CD4-positive, alpha-beta memory T cell (primary cell): ENCODE measurements at regions of chr5 and their contacts with region 1.

Region 1: DNA sequence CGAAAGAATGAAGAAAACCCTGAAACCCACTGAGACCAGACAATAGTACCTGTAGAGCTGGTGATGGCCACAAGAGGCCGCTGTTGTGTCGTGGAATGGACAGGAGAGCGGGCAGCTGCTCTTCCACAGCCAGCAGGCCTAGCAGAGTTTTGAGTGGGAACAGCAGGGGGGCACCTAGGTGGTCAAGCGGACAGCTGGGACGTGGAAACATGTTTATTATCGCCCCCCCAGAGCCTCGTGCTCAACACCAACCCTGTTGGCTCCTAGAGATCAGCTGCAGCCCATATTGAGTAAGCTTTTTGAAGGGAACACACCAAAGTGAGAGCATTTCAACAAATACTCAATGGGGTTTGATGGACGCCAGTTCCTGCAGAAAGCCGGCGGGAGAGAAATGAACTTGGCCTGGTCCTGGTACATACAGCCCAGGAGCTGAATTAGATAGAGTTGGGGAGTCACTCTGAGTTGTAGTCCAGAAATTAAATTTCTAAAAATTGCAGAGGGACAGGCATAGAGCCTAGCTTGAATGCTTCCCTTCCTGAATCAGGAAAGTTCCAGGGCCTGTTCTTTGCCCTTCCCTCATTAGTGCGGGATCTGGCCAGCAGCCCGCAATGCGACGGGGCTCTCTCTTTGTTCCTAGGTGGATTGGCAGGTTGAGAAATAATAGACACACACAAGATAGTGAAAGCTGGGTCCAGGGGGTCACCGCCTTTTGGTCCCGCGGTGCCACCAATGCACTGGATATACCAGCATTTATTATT is 33.8 kb downstream of the MFAP3 start:
- DNase-seq: peak; percentile 75 to 78 (median 76)
- H3K4me3 ChIP-seq: no peak overlapping the region
- H3K4me3 Mint-ChIP-seq: peak overlapping the region in 1 of 8 donors; percentile 21
- H3K27ac ChIP-seq: no peak overlapping the region
- H3K27ac Mint-ChIP-seq: peak overlapping the region in 6 of 7 donors; percentile 1 to 89 (median 46)
- H3K4me1 ChIP-seq: peaks cover 23% of the 10 kb centered on the region
- H3K4me1 Mint-ChIP-seq: peaks cover 5 to 35% (median 14%) of the 10 kb centered on the region in 4 donors
- H3K27me3 ChIP-seq: no peaks in the 10 kb centered on the region
- H3K27me3 Mint-ChIP-seq: peaks cover 0 to 2% of the 10 kb centered on the region in 2 donors

Region 2: DNA sequence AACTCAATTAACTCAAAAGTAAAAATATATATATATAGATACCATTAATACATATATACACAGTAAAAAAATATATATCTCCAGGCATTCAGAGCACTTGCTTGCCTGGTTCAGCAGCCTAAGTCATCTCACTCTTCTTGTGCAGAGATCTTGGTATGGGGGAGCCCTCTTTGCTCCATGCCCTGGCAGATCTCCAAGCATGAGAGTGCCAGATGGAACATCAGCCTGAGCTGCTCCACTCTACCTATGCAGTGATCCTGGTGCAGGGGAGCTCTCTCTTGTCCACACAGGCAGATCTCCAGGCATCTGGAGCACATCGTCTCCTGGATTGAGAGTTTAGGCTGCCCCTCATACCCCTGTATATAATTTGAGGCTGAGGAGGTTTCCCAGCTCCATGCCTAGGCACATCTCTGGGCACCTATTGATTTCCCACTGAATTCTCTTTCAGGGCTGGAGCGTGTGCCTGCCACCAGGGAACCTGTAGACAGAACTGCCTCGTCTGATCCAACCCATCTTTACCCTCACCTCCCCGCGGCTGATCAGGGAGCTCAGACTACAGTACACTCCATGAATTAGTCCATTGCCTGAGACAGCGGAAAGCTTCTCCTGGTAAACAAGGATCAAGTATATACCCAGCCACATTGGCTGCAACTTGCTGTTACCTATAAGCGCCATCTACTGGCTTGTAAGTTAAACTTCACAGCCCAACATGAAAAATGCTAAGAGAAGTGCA is 924.5 kb before region 1 on chr5:
- CTCF ChIA-PET with region 1: no interaction called
- POLR2A ChIA-PET with region 1: no interaction called
- intact Hi-C with region 1: no loop called
- DNase-seq: no peak
- H3K4me3 ChIP-seq: no peak overlapping the region
- H3K4me3 Mint-ChIP-seq: no peak overlapping the region
- H3K27ac ChIP-seq: no peak overlapping the region
- H3K27ac Mint-ChIP-seq: no peak overlapping the region
- H3K4me1 ChIP-seq: no peaks in the 10 kb centered on the region
- H3K4me1 Mint-ChIP-seq: no peaks in the 10 kb centered on the region
- H3K27me3 ChIP-seq: no peaks in the 10 kb centered on the region
- H3K27me3 Mint-ChIP-seq: no peaks in the 10 kb centered on the region

Region 3: DNA sequence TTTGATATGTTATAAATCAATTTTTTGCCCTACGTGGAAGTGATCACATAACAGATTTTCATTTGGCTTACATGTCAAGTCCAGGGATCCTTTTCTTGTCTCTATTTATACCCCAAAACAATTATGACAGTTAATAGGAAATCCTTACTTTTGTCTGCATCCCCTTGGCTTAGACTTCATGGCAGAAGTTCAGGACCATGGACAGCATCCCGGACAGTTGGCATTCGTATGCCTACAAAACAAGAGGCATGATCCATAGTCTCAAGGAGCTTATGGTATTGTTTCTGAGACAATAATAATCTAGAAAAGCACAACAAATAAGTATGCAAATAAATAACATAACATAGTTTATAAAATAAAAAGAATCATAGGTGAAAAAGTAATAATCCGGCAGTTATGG is 796.4 kb before region 1 on chr5:
- CTCF ChIA-PET with region 1: no interaction called
- POLR2A ChIA-PET with region 1: no interaction called
- intact Hi-C with region 1: no loop called
- DNase-seq: no peak
- H3K4me3 ChIP-seq: no peak overlapping the region
- H3K4me3 Mint-ChIP-seq: no peak overlapping the region
- H3K27ac ChIP-seq: no peak overlapping the region
- H3K27ac Mint-ChIP-seq: no peak overlapping the region
- H3K4me1 ChIP-seq: no peaks in the 10 kb centered on the region
- H3K4me1 Mint-ChIP-seq: no peaks in the 10 kb centered on the region
- H3K27me3 ChIP-seq: no peaks in the 10 kb centered on the region
- H3K27me3 Mint-ChIP-seq: no peaks in the 10 kb centered on the region

Region 4: GRCh38 chr5:153797484-153797883 is 275.1 kb before region 1 on chr5:
- CTCF ChIA-PET with region 1: no interaction called
- POLR2A ChIA-PET with region 1: no interaction called
- intact Hi-C with region 1: no loop called
- DNase-seq: no peak
- H3K4me3 ChIP-seq: no peak overlapping the region
- H3K4me3 Mint-ChIP-seq: no peak overlapping the region
- H3K27ac ChIP-seq: no peak overlapping the region
- H3K27ac Mint-ChIP-seq: no peak overlapping the region
- H3K4me1 ChIP-seq: no peaks in the 10 kb centered on the region
- H3K4me1 Mint-ChIP-seq: no peaks in the 10 kb centered on the region
- H3K27me3 ChIP-seq: no peaks in the 10 kb centered on the region
- H3K27me3 Mint-ChIP-seq: no peaks in the 10 kb centered on the region

Region 5: GRCh38 chr5:154038707-154039457 is 33.7 kb before region 1 on chr5 and contains the starts of genes FAM114A2 and MFAP3:
- CTCF ChIA-PET with region 1: interaction called, 16 read pairs
- POLR2A ChIA-PET with region 1: interaction called, 10 read pairs
- intact Hi-C with region 1: no loop called
- DNase-seq: peak; percentile 85 to 91 (median 86)
- H3K4me3 ChIP-seq: peak within 1 kb of the TSS; percentile 59 to 99
- H3K4me3 Mint-ChIP-seq: peak within 1 kb of the TSS; percentile 92 to 99 (median 98)
- H3K27ac ChIP-seq: peak within 1 kb of the TSS; percentile 72
- H3K27ac Mint-ChIP-seq: peak within 1 kb of the TSS; percentile 91 to 99 (median 98)
- H3K4me1 ChIP-seq: peaks cover 44% of the 10 kb centered on the region
- H3K4me1 Mint-ChIP-seq: peaks cover 39 to 59% (median 51%) of the 10 kb centered on the region in 4 donors
- H3K27me3 ChIP-seq: no peaks in the 10 kb centered on the region
- H3K27me3 Mint-ChIP-seq: no peaks in the 10 kb centered on the region
- total RNA-seq, gene FAM114A2: 39.0 to 45.5 TPM
- total RNA-seq, gene MFAP3: 25.4 to 27.4 TPM

Region 6: GRCh38 chr5:154058055-154059038 is 14.2 kb before region 1 on chr5:
- CTCF ChIA-PET with region 1: interaction called, 31 read pairs
- POLR2A ChIA-PET with region 1: interaction called, 3 read pairs
- intact Hi-C with region 1: no loop called
- DNase-seq: no peak
- H3K4me3 ChIP-seq: no peak overlapping the region
- H3K4me3 Mint-ChIP-seq: peak overlapping the region in 4 of 8 donors; percentile 5 to 47 (median 40)
- H3K27ac ChIP-seq: no peak overlapping the region
- H3K27ac Mint-ChIP-seq: peak overlapping the region; percentile 19 to 85 (median 45)
- H3K4me1 ChIP-seq: peaks cover 11% of the 10 kb centered on the region
- H3K4me1 Mint-ChIP-seq: peaks cover 21 to 26% (median 25%) of the 10 kb centered on the region in 4 donors
- H3K27me3 ChIP-seq: no peaks in the 10 kb centered on the region
- H3K27me3 Mint-ChIP-seq: no peaks in the 10 kb centered on the region

Region 7: DNA sequence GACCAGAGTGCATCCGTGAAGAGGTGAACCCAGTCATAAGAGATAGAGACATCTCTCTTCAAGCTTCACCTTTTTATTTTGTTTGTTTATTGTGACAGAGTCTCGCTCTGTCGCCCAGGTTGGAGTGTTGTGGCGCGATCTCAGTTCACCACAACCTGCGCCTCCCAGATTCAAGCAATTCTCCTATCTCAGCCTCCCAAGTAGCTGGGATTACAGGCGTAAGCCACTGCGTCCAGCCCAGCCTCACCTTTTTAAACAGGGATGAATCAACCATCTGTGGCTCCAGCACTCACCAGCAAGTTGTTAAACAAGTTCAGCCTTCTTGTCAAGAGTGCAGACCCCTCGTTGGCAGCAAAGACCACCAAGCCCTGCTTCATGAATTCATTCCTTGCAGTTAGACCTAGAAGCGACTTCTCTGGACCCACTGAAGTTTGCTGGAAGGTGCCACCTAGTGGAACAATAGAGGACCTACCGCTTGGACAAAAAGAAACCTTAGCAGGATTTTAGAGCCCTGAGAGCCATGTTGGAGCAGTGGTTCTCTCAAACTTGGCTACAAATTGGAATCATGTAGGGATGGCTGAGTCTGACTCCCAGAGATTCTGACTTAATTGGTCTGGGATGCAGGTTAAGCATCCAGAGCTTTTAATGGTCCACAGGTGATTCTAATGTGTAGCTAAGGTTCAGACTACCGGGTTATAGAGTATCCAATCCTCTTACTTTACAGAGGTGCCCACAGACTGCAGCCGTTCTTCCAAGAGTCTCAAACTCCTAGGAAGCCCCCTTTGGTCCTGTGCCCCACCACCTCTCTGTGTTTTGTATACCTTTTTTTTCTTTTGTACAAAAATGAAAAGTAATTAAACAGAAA is 107.5 kb after region 1 on chr5:
- CTCF ChIA-PET with region 1: interaction called, 77 read pairs
- POLR2A ChIA-PET with region 1: no interaction called
- intact Hi-C with region 1: loop called (anchors 1 kb)
- DNase-seq: peak in 4 of 5 donors; percentile 37 to 52 (median 42)
- H3K4me3 ChIP-seq: no peak overlapping the region
- H3K4me3 Mint-ChIP-seq: no peak overlapping the region
- H3K27ac ChIP-seq: no peak overlapping the region
- H3K27ac Mint-ChIP-seq: no peak overlapping the region
- H3K4me1 ChIP-seq: no peaks in the 10 kb centered on the region
- H3K4me1 Mint-ChIP-seq: peaks cover 0 to 4% (median 2%) of the 10 kb centered on the region in 4 donors
- H3K27me3 ChIP-seq: no peaks in the 10 kb centered on the region
- H3K27me3 Mint-ChIP-seq: peaks cover 2 to 4% of the 10 kb centered on the region in 2 donors

Region 8: GRCh38 chr5:154196955-154197652 is 124.5 kb after region 1 on chr5:
- CTCF ChIA-PET with region 1: interaction called, 20 read pairs
- POLR2A ChIA-PET with region 1: interaction called, 5 read pairs
- intact Hi-C with region 1: loop called (anchors 1 kb)
- DNase-seq: peak in 1 of 5 donors; percentile 18
- H3K4me3 ChIP-seq: no peak overlapping the region
- H3K4me3 Mint-ChIP-seq: peak overlapping the region in 5 of 8 donors; percentile 0 to 49 (median 43)
- H3K27ac ChIP-seq: peak overlapping the region; percentile 47
- H3K27ac Mint-ChIP-seq: peak overlapping the region; percentile 80 to 95 (median 92)
- H3K4me1 ChIP-seq: peaks cover 63% of the 10 kb centered on the region
- H3K4me1 Mint-ChIP-seq: peaks cover 47 to 90% (median 73%) of the 10 kb centered on the region in 4 donors
- H3K27me3 ChIP-seq: no peaks in the 10 kb centered on the region
- H3K27me3 Mint-ChIP-seq: no peaks in the 10 kb centered on the region

Region 9: DNA sequence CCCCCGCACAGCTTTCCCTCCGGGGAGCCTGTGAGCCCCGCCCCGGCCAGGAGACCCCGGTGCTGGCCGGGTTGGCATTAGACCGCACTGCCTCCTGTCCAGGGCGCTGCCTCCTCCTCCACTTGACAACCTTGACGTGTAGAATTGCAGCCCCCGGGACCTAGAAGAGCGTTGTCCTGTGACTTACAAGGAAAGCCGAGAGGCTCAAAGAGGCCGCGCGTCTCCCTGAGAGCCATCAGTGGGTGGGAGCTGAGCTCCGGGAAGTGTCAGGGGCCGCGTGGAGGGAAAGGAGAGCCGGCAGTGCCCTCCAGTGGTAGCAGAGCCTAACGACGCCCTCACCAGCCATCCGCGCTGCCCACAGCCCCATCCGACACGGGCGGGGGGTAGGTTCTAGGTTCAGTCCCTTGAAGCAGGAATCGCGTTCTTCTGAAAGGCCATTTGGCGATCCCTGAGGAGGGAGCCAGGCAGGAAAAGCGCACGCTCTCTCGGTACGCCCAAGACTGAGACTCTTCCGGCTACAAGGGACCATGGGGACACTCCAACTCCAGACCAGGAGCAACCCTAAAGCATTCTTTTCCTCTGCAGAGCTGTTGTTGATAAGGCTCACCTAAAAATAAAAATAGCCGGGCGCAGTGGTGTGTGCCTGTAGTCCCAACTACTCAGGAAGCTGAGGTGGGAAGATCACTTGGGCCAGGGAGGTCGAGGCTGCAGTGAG is 332.6 kb after region 1 on chr5:
- CTCF ChIA-PET with region 1: interaction called, 220 read pairs
- POLR2A ChIA-PET with region 1: interaction called, 14 read pairs
- intact Hi-C with region 1: loop called (anchors 1 kb)
- DNase-seq: peak; percentile 56 to 61 (median 59)
- H3K4me3 ChIP-seq: peak overlapping the region in 1 of 2 donors; percentile 14
- H3K4me3 Mint-ChIP-seq: peak overlapping the region in 7 of 8 donors; percentile 27 to 80 (median 43)
- H3K27ac ChIP-seq: no peak overlapping the region
- H3K27ac Mint-ChIP-seq: peak overlapping the region in 3 of 7 donors; percentile 13 to 43 (median 30)
- H3K4me1 ChIP-seq: peaks cover 4% of the 10 kb centered on the region
- H3K4me1 Mint-ChIP-seq: peaks cover 2 to 16% (median 11%) of the 10 kb centered on the region in 4 donors
- H3K27me3 ChIP-seq: no peaks in the 10 kb centered on the region
- H3K27me3 Mint-ChIP-seq: no peaks in the 10 kb centered on the region